B cell (primary cell): ENCODE measurements at regions of chr10 and their contacts with region 1.

Region 1: GRCh38 chr10:119596537-119597404 is at the start of gene TIAL1:
- DNase-seq: peak; percentile 96
- ATAC-seq: peak; percentile 86
- H3K4me3 ChIP-seq: peak within 1 kb of the TSS; percentile 86 to 97 (median 90)
- H3K4me3 Mint-ChIP-seq: peak within 1 kb of the TSS; percentile 99
- H3K27ac ChIP-seq: peak within 1 kb of the TSS; percentile 88 to 94
- H3K27ac Mint-ChIP-seq: peak within 1 kb of the TSS; percentile 98
- H3K4me1 ChIP-seq: peaks cover 31 to 43% of the 10 kb centered on the region in 2 donors
- H3K4me1 Mint-ChIP-seq: peaks cover 54% of the 10 kb centered on the region
- H3K27me3 ChIP-seq: no peaks in the 10 kb centered on the region
- H3K27me3 Mint-ChIP-seq: no peaks in the 10 kb centered on the region
- CTCF ChIP-seq: no peak
- total RNA-seq, gene TIAL1: 159 and 175 TPM in 2 replicates

Region 2: GRCh38 chr10:119070395-119071165 is 526.2 kb before region 1 on chr10:
- CTCF ChIA-PET with region 1: no interaction called
- POLR2A ChIA-PET with region 1: interaction called, 12 read pairs
- intact Hi-C with region 1: no loop called
- DNase-seq: no peak
- ATAC-seq: no peak
- H3K4me3 ChIP-seq: no peak overlapping the region
- H3K4me3 Mint-ChIP-seq: no peak overlapping the region
- H3K27ac ChIP-seq: no peak overlapping the region
- H3K27ac Mint-ChIP-seq: no peak overlapping the region
- H3K4me1 ChIP-seq: no peaks in the 10 kb centered on the region
- H3K4me1 Mint-ChIP-seq: peaks cover 6% of the 10 kb centered on the region
- H3K27me3 ChIP-seq: no peaks in the 10 kb centered on the region
- H3K27me3 Mint-ChIP-seq: no peaks in the 10 kb centered on the region
- CTCF ChIP-seq: no peak

Region 3: GRCh38 chr10:119165171-119166110 is 431.3 kb before region 1 on chr10 and contains the start of gene SFXN4:
- CTCF ChIA-PET with region 1: no interaction called
- POLR2A ChIA-PET with region 1: no interaction called
- intact Hi-C with region 1: loop called (anchors 1 kb)
- DNase-seq: peak; percentile 89
- ATAC-seq: peak; percentile 92
- H3K4me3 ChIP-seq: peak within 1 kb of the TSS; percentile 46 to 86 (median 79)
- H3K4me3 Mint-ChIP-seq: peak within 1 kb of the TSS; percentile 96
- H3K27ac ChIP-seq: peak within 1 kb of the TSS; percentile 72 to 80
- H3K27ac Mint-ChIP-seq: peak within 1 kb of the TSS; percentile 93
- H3K4me1 ChIP-seq: peaks cover 7 to 19% of the 10 kb centered on the region in 2 donors
- H3K4me1 Mint-ChIP-seq: peaks cover 20% of the 10 kb centered on the region
- H3K27me3 ChIP-seq: no peaks in the 10 kb centered on the region
- H3K27me3 Mint-ChIP-seq: no peaks in the 10 kb centered on the region
- CTCF ChIP-seq: no peak
- total RNA-seq, gene SFXN4: 8.4 and 9.8 TPM in 2 replicates

Region 4: GRCh38 chr10:119517235-119518141 is 79.3 kb before region 1 on chr10:
- CTCF ChIA-PET with region 1: no interaction called
- POLR2A ChIA-PET with region 1: no interaction called
- intact Hi-C with region 1: loop called (anchors 5 kb)
- DNase-seq: peak; percentile 89
- ATAC-seq: peak; percentile 73
- H3K4me3 ChIP-seq: peak overlapping the region in 3 of 5 experiments; percentile 25 to 51 (median 33)
- H3K4me3 Mint-ChIP-seq: peak overlapping the region; percentile 64
- H3K27ac ChIP-seq: peak overlapping the region; percentile 67 to 95
- H3K27ac Mint-ChIP-seq: peak overlapping the region; percentile 94
- H3K4me1 ChIP-seq: peaks cover 31 to 38% of the 10 kb centered on the region in 2 donors
- H3K4me1 Mint-ChIP-seq: peaks cover 34% of the 10 kb centered on the region
- H3K27me3 ChIP-seq: no peaks in the 10 kb centered on the region
- H3K27me3 Mint-ChIP-seq: no peaks in the 10 kb centered on the region
- CTCF ChIP-seq: no peak

Region 5: GRCh38 chr10:119650692-119651513 is 54.1 kb after region 1 on chr10 and contains the start of gene BAG3:
- CTCF ChIA-PET with region 1: no interaction called
- POLR2A ChIA-PET with region 1: interaction called, 3 read pairs
- intact Hi-C with region 1: loop called (anchors 1 kb)
- DNase-seq: peak; percentile 85
- ATAC-seq: peak; percentile 94
- H3K4me3 ChIP-seq: peak within 1 kb of the TSS; percentile 82 to 96 (median 93)
- H3K4me3 Mint-ChIP-seq: peak within 1 kb of the TSS; percentile 97
- H3K27ac ChIP-seq: peak within 1 kb of the TSS; percentile 82 to 85
- H3K27ac Mint-ChIP-seq: peak within 1 kb of the TSS; percentile 94
- H3K4me1 ChIP-seq: peaks cover 3 to 12% of the 10 kb centered on the region in 2 donors
- H3K4me1 Mint-ChIP-seq: peaks cover 17% of the 10 kb centered on the region
- H3K27me3 ChIP-seq: peaks cover 0 to 3% (median 0%) of the 10 kb centered on the region in 4 experiments
- H3K27me3 Mint-ChIP-seq: no peaks in the 10 kb centered on the region
- CTCF ChIP-seq: no peak
- total RNA-seq, gene BAG3: 3.9 and 4.2 TPM in 2 replicates

Region 6: DNA sequence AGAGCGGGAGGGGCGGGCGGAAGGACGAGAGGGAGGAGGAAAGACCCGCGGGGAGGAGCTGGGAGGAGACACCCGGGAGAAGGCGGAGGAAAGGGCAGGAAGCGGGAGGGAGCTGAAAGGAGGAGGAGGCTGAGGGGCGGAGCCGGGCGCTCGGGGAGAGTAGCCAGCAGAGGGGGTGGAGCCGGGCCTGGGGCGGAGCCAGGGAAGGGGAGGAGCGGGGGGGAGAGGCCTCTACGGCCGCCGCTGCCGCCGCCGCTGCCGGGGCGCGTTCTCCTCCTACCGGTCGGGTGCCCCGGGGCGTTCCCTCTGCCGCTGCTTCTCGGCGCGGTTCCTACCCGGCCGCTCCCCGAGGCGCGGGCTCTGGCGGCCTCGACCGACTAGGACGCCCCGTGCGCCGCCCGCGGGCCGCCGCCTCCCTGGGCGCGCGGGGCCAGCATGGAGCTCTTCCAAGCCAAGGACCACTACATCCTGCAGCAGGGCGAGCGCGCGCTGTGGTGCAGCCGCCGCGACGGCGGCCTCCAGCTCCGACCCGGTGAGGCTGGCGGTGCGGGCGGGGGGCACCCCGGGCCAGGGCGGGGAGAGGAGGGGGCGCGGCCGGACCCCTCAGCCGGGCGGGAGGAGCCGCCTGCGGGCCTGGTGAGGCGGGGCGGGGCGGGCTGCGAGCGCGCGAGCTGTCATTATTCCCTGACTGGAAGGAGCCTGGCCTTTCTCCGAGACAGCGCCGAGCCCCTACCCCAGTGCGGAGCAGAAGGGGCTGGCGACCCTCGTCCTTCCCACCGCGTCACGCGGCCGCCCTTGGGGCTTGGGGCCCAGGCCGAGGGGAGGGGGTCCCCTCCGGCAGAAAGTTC is 129.3 kb after region 1 on chr10 and contains the start of gene INPP5F:
- CTCF ChIA-PET with region 1: no interaction called
- POLR2A ChIA-PET with region 1: no interaction called
- intact Hi-C with region 1: loop called (anchors 1 kb)
- DNase-seq: peak; percentile 95
- ATAC-seq: peak; percentile 93
- H3K4me3 ChIP-seq: peak within 1 kb of the TSS; percentile 55 to 85 (median 70)
- H3K4me3 Mint-ChIP-seq: peak within 1 kb of the TSS; percentile 98
- H3K27ac ChIP-seq: peak within 1 kb of the TSS; percentile 73 to 90
- H3K27ac Mint-ChIP-seq: peak within 1 kb of the TSS; percentile 95
- H3K4me1 ChIP-seq: peaks cover 38 to 51% of the 10 kb centered on the region in 2 donors
- H3K4me1 Mint-ChIP-seq: peaks cover 48% of the 10 kb centered on the region
- H3K27me3 ChIP-seq: no peaks in the 10 kb centered on the region
- H3K27me3 Mint-ChIP-seq: no peaks in the 10 kb centered on the region
- CTCF ChIP-seq: peak; percentile 55
- total RNA-seq, gene INPP5F: 37.5 and 42.5 TPM in 2 replicates

Region 7: GRCh38 chr10:119769886-119770285 is 173.1 kb after region 1 on chr10:
- CTCF ChIA-PET with region 1: no interaction called
- POLR2A ChIA-PET with region 1: no interaction called
- intact Hi-C with region 1: no loop called
- DNase-seq: no peak
- ATAC-seq: no peak
- H3K4me3 ChIP-seq: no peak overlapping the region
- H3K4me3 Mint-ChIP-seq: no peak overlapping the region
- H3K27ac ChIP-seq: peak overlapping the region in 1 of 2 donors; percentile 14
- H3K27ac Mint-ChIP-seq: no peak overlapping the region
- H3K4me1 ChIP-seq: peaks cover 0 to 6% of the 10 kb centered on the region in 2 donors
- H3K4me1 Mint-ChIP-seq: peaks cover 32% of the 10 kb centered on the region
- H3K27me3 ChIP-seq: no peaks in the 10 kb centered on the region
- H3K27me3 Mint-ChIP-seq: no peaks in the 10 kb centered on the region
- CTCF ChIP-seq: no peak

Region 8: GRCh38 chr10:119892188-119893065 is 295.7 kb after region 1 on chr10 and contains the start of gene SEC23IP:
- CTCF ChIA-PET with region 1: no interaction called
- POLR2A ChIA-PET with region 1: interaction called, 4 read pairs
- intact Hi-C with region 1: loop called (anchors 1 kb)
- DNase-seq: peak; percentile 92
- ATAC-seq: peak; percentile 98
- H3K4me3 ChIP-seq: peak within 1 kb of the TSS; percentile 76 to 98 (median 95)
- H3K4me3 Mint-ChIP-seq: peak within 1 kb of the TSS; percentile 96
- H3K27ac ChIP-seq: peak within 1 kb of the TSS; percentile 82
- H3K27ac Mint-ChIP-seq: peak within 1 kb of the TSS; percentile 98
- H3K4me1 ChIP-seq: peaks cover 12 to 13% of the 10 kb centered on the region in 2 donors
- H3K4me1 Mint-ChIP-seq: peaks cover 45% of the 10 kb centered on the region
- H3K27me3 ChIP-seq: no peaks in the 10 kb centered on the region
- H3K27me3 Mint-ChIP-seq: no peaks in the 10 kb centered on the region
- CTCF ChIP-seq: no peak
- total RNA-seq, gene SEC23IP: 69.7 and 77.3 TPM in 2 replicates